Left lung (tissue), 14 donors: ENCODE measurements at regions of chr19 and their contacts with region 1.

Region 1: GRCh38 chr19:21698215-21698614 is 69.2 kb downstream of the ZNF100 start:
- DNase-seq: peak in 2 of 4 donors; percentile 19 to 52
- ATAC-seq: peak; percentile 87
- H3K4me3 ChIP-seq: no peak overlapping the region
- H3K27ac ChIP-seq: no peak overlapping the region
- H3K4me1 ChIP-seq: no peaks in the 10 kb centered on the region
- H3K27me3 ChIP-seq: no peaks in the 10 kb centered on the region
- CTCF ChIP-seq: peak; percentile 56 to 65

Region 2: GRCh38 chr19:21482863-21483276 is 215.3 kb before region 1 on chr19:
- intact Hi-C with region 1: loop called in 1 of 2 experiments (anchors 10 kb)
- DNase-seq: peak in 3 of 4 donors; percentile 55 to 91 (median 77)
- ATAC-seq: peak; percentile 88
- H3K4me3 ChIP-seq: no peak overlapping the region
- H3K27ac ChIP-seq: no peak overlapping the region
- H3K4me1 ChIP-seq: no peaks in the 10 kb centered on the region
- H3K27me3 ChIP-seq: no peaks in the 10 kb centered on the region
- CTCF ChIP-seq: peak; percentile 85 to 94